ENCODE measurements at regions of chr9 and their contacts with region 1.

Region 1: GRCh38 chr9:127311239-127311741 is 46.7 kb downstream of the GARNL3 start:
- DNase-seq: peak; percentile 67
- H3K4me3 Mint-ChIP-seq: no peak overlapping the region
- H3K27ac Mint-ChIP-seq: no peak overlapping the region
- H3K4me1 Mint-ChIP-seq: no peaks in the 10 kb centered on the region
- H3K27me3 Mint-ChIP-seq: peaks cover 18% of the 10 kb centered on the region

Region 2: GRCh38 chr9:127450830-127451724 is 139.8 kb after region 1 on chr9 and contains the starts of genes LRSAM1 and RPL12:
- CTCF ChIA-PET with region 1: interaction called, 7 read pairs
- intact Hi-C with region 1: loop called (anchors 10 kb)
- DNase-seq: peak; percentile 97
- H3K4me3 Mint-ChIP-seq: peak within 1 kb of the TSS; percentile 89
- H3K27ac Mint-ChIP-seq: peak within 1 kb of the TSS; percentile 95
- H3K4me1 Mint-ChIP-seq: peaks cover 42% of the 10 kb centered on the region
- H3K27me3 Mint-ChIP-seq: no peaks in the 10 kb centered on the region
- total RNA-seq, gene LRSAM1: 8.8 to 9.9 TPM
- total RNA-seq, gene RPL12: 3,038 to 3,119 TPM

Measured in activated naive CD4-positive, alpha-beta T cell treated with anti-CD3 and anti-CD28 coated beads for 36 hours (primary cell).